BJ (cell line): ENCODE measurements at regions of chr12 and their contacts with region 1.

Region 1: DNA sequence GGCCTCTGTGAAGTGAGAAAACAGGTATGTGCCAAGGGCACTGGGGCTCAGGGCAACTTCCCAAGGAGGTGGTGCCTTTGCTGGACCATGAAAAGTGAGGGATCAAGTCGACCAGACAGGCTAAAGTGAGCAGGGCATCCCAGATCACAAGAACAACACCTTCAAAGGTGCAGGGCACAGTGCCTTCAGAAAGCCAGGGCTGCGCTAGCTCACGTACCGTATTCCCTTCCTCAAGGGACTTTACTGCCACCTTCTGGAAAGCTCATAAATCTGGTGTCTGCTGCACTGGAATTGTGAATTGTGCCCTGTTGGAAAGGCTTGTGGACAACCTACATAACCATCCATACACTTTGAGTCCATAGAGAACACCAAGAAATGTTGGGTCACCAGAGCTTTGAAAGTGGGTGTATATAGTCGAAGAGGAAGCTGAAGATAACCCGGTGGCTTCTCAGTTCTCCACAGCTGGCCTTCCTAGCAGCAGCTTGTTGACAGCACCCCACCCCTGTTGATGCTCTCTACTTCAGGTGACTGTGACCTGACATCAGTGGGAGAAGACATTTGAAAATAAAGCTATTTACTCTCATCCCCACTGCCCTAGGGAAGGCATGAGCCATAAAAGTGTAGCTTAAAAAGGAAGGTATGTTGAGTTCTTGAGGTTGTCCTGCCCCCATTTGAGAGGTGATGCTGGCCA is 24.5 kb downstream of the FIGNL2 start:
- DNase-seq: no peak
- H3K4me3 ChIP-seq: no peak overlapping the region
- H3K27me3 ChIP-seq: no peaks in the 10 kb centered on the region; the same call in 1 of the 2 replicates
- CTCF ChIP-seq: peak; percentile 64

Region 2: DNA sequence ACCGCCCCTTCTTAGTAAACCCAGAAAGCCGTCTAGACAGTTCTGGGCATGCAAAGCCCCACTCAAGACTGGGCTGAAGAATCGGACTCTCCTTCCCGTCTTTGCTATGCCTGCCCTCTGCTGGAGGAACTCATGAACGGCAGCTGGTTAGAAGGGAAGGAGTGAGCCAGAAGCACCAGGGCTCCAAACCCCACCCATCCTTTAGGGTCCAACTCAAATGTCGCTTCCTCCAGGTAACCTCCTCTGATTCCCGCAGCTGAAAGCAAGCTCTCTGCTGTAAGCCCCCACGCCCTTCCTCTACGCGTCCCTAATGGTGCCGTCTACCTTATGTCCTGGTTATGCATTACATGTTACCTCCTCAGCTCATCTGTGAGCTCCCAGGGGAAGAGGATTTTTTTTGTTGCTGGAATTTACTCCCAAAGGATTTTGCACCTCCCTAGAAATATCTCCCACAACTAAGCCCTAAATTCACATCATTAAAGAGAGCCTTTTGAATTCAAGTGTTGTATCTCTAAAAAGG is 292.0 kb before region 1 on chr12:
- CTCF ChIA-PET with region 1: interaction called, 15 read pairs
- POLR2A ChIA-PET with region 1: no interaction called
- DNase-seq: no peak
- H3K4me3 ChIP-seq: no peak overlapping the region
- H3K27me3 ChIP-seq: no peaks in the 10 kb centered on the region
- CTCF ChIP-seq: peak; percentile 96

Region 3: GRCh38 chr12:51868821-51869502 is 44.9 kb after region 1 on chr12:
- CTCF ChIA-PET with region 1: interaction called, 20 read pairs
- POLR2A ChIA-PET with region 1: no interaction called
- DNase-seq: no peak
- H3K4me3 ChIP-seq: peak overlapping the region; percentile 41
- H3K27me3 ChIP-seq: peaks cover 3% of the 10 kb centered on the region
- CTCF ChIP-seq: 0 out of 2 replicates have a peak, but pooled peaks have one; percentile 8

Region 4: DNA sequence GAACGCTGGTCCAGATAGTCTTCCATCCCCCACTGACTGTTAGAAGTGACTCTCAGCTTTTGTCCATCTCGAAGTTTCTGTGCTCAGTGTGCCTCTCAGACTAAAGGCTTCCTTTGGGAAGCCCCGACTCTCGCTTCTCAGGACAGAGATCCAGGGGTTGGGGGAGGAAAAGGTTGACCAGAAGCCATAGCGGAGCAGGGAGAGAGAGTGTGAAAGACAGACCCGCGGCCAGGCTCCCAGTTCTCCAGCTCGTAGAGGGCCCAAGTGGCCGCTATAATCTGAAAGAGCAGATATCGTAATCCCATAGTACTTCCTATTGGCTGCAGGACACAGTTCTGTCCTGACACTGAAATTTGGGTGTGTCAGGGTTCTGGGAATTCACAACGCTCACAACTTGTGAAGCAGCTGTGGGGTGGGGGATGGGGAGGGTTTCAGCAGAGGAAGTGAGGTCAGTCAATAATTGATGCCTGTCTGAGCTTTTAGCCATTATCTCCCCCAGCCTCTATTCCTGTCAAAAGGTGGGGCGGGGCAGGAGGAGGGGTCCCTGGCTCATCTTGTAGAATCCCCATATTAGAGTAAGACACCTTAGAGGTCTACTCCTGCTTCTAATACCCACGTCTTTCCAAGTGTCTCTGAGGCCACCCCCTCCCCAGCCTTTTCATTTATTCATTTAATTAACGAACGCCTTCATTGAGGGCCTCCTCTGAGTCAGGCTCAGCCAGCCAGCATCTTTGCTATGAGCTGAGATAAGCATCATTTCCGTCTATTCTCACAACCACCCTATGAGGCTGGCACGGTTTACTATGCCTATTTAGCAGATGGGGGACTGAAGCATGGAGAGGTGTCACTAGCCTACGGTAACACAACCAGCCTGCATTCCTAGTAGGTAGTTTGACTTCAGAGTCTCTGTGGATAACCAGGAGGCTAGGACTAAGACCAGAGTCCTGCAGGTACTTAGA is 81.7 kb after region 1 on chr12:
- CTCF ChIA-PET with region 1: no interaction called
- POLR2A ChIA-PET with region 1: no interaction called
- DNase-seq: no peak
- H3K4me3 ChIP-seq: no peak overlapping the region
- H3K27me3 ChIP-seq: no peaks in the 10 kb centered on the region
- CTCF ChIP-seq: no peak